ENCODE measurements at regions of chr2 and their contacts with region 1.

Region 1: DNA sequence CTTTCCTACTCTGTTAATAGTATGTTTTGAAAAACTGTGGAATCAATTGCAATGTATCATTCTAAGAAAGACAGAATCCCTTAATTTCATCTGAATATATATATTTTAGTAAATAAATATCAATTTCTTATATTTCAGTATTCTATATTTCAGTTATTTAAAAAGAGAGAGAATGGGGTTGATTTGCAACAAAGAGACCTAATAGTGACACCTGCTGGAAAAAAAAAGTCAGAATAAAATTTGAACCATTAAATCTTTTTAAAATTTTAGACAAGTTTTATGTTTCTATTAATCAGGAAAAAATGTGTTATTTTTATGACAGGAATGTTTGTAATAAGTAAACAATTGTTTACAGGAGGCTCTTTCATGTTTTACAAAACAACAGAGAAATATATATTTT is 20.7 kb upstream of the CCNT2 start:
- DNase-seq: no peak
- ATAC-seq: no peak
- H3K4me3 Mint-ChIP-seq: no peak overlapping the region
- H3K27ac Mint-ChIP-seq: no peak overlapping the region
- H3K4me1 Mint-ChIP-seq: no peaks in the 10 kb centered on the region
- H3K27me3 Mint-ChIP-seq: no peaks in the 10 kb centered on the region
- CTCF ChIP-seq: peak; percentile 72

Region 2: GRCh38 chr2:134668821-134669220 is 229.1 kb before region 1 on chr2:
- CTCF ChIA-PET with region 1: no interaction called
- POLR2A ChIA-PET with region 1: no interaction called
- intact Hi-C with region 1: loop called (anchors 10 kb)
- DNase-seq: peak; percentile 95
- ATAC-seq: peak; percentile 89
- H3K4me3 Mint-ChIP-seq: no peak overlapping the region
- H3K27ac Mint-ChIP-seq: peak overlapping the region; percentile 6
- H3K4me1 Mint-ChIP-seq: peaks cover 55% of the 10 kb centered on the region
- H3K27me3 Mint-ChIP-seq: peaks cover 21% of the 10 kb centered on the region
- CTCF ChIP-seq: no peak

Region 3: DNA sequence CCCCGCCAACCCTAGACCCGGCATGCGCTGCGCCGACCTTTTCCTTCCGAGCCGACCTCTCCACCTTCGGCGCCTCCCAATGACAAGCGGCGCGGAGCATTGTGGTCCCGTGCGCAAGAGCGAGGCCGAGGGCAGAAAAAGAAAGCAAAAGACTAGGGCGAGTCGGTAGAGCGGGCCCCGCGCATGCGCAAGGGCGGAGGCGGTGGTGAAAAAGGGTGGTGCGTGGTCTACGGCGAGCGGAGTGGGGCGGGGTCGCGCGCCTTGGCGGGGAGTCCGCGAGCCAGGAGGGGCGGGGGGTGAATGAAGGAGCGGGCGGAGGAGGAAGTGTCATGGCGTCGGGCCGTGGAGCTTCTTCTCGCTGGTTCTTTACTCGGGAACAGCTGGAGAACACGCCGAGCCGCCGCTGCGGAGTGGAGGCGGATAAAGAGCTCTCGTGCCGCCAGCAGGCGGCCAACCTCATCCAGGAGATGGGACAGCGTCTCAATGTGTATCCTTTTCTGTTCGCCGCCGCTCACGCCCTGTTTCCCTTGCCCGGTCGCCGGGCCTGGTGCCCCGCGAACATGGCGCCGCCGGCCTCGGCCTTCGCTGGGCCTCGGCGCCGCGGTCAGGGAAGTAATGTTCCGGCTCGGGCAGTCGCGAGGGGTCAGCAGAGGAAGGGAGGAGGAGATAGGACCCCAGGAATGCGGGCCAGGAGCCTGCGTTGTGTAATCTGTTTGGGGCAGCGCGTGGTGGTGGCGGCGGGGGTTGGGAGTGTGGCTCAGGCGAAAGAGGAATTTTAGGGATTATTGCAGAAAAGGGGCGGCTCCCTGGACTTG is 20.8 kb after region 1 on chr2 and contains the start of gene CCNT2:
- CTCF ChIA-PET with region 1: no interaction called
- POLR2A ChIA-PET with region 1: no interaction called
- intact Hi-C with region 1: no loop called
- DNase-seq: peak; percentile 99
- ATAC-seq: peak; percentile 88
- H3K4me3 Mint-ChIP-seq: peak within 1 kb of the TSS; percentile 82
- H3K27ac Mint-ChIP-seq: peak within 1 kb of the TSS; percentile 97
- H3K4me1 Mint-ChIP-seq: peaks cover 30% of the 10 kb centered on the region
- H3K27me3 Mint-ChIP-seq: peaks cover 2% of the 10 kb centered on the region
- CTCF ChIP-seq: no peak
- total RNA-seq, gene CCNT2: 30.5 to 32.1 TPM

Measured in activated CD8-positive, alpha-beta T cell treated with anti-CD3 and anti-CD28 coated beads for 36 hours (primary cell).